HepG2 (cell line): ENCODE measurements at regions of chr6 and their contacts with region 1.

Region 1: GRCh38 chr6:31776989-31777666 is at the start of gene VWA7:
- DNase-seq: peak; percentile 85
- ATAC-seq: peak; percentile 65
- H3K4me3 ChIP-seq: peak within 1 kb of the TSS; percentile 45 to 72 (median 48)
- H3K27ac ChIP-seq: peak within 1 kb of the TSS; percentile 70
- H3K4me1 ChIP-seq: peaks cover 57% of the 10 kb centered on the region
- H3K27me3 ChIP-seq: no peaks in the 10 kb centered on the region
- CTCF ChIP-seq: peak; percentile 26
- EP300 ChIP-seq: peak in 1 of 2 experiments; percentile 45; a peak in 1 of 4 replicates
- POLR2A ChIP-seq: no peak; a peak in 1 of 4 replicates
- RAD21 ChIP-seq: no peak
- total RNA-seq, gene VWA7: 0.79 and 0.86 TPM in 2 replicates

Region 2: GRCh38 chr6:30914076-30914853 is 862.9 kb before region 1 on chr6 and contains the start of gene VARS2:
- CTCF ChIA-PET with region 1: no interaction called
- POLR2A ChIA-PET with region 1: no interaction called
- in situ Hi-C with region 1: no loop called
- intact Hi-C with region 1: no loop called
- DNase-seq: peak; percentile 92
- ATAC-seq: peak; percentile 96
- H3K4me3 ChIP-seq: peak within 1 kb of the TSS; percentile 61 to 80 (median 78)
- H3K27ac ChIP-seq: peak within 1 kb of the TSS; percentile 81
- H3K4me1 ChIP-seq: peaks cover 32% of the 10 kb centered on the region
- H3K27me3 ChIP-seq: no peaks in the 10 kb centered on the region
- CTCF ChIP-seq: peak; percentile 81
- EP300 ChIP-seq: peak in 1 of 2 experiments; percentile 35; a peak in 1 of 4 replicates
- POLR2A ChIP-seq: peak; percentile 85 to 89
- RAD21 ChIP-seq: peak; percentile 85; the same call in 1 of the 2 replicates
- total RNA-seq, gene VARS2: 45.9 and 71.8 TPM in 2 replicates

Region 3: GRCh38 chr6:31763619-31763940 is 13.5 kb before region 1 on chr6:
- CTCF ChIA-PET with region 1: no interaction called
- POLR2A ChIA-PET with region 1: interaction called, 11 read pairs
- in situ Hi-C with region 1: no loop called
- intact Hi-C with region 1: no loop called
- DNase-seq: peak; percentile 68
- ATAC-seq: peak; percentile 10
- H3K4me3 ChIP-seq: no peak overlapping the region
- H3K27ac ChIP-seq: no peak overlapping the region
- H3K4me1 ChIP-seq: peaks cover 47% of the 10 kb centered on the region
- H3K27me3 ChIP-seq: no peaks in the 10 kb centered on the region
- CTCF ChIP-seq: peak; percentile 77
- EP300 ChIP-seq: no peak
- POLR2A ChIP-seq: no peak
- RAD21 ChIP-seq: no peak

Region 4: DNA sequence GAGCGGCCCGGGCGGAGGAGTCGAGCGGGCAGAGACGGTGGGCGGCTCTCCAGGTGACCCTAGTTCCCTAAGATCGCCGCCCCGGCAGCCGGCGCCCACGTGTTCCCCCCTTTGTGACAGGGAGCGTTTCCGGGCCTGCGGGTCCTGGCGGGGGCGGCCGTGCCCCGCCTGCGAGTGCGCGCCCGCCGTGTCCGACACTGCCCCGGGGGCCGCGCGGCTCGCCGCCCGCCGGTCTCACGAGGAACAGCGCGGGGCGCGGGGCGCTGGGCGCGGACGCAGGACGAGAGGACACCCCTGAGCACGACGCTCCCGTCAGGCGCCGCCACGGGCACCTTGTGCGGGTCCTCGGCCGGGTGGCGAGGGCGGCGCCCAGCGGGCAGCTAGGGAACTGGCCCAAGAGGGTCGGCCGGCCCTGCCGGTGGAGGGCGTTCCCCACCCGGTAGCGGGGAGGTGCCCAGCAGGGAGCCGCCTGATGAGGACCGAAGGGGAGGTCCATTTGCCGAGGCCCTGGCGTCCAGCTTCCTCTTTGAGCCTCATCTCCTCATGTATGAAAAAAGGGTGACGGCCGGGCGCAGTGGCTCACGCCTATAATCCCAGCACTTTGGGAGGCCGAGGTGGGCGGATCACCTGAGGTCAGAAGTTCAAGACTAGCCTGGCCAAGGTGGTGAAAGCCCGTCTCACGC is 18.6 kb after region 1 on chr6 and contains the start of gene VARS1:
- CTCF ChIA-PET with region 1: interaction called, 9 read pairs
- POLR2A ChIA-PET with region 1: interaction called, 20 read pairs
- in situ Hi-C with region 1: no loop called
- intact Hi-C with region 1: no loop called
- DNase-seq: peak; percentile 90
- ATAC-seq: peak; percentile 89
- H3K4me3 ChIP-seq: peak within 1 kb of the TSS; percentile 89 to 98 (median 98)
- H3K27ac ChIP-seq: peak within 1 kb of the TSS; percentile 76
- H3K4me1 ChIP-seq: peaks cover 25% of the 10 kb centered on the region
- H3K27me3 ChIP-seq: no peaks in the 10 kb centered on the region; a peak in 1 of 5 replicates
- CTCF ChIP-seq: peak; percentile 98
- EP300 ChIP-seq: no peak
- POLR2A ChIP-seq: peak in 1 of 2 experiments; percentile 46; a peak in 1 of 4 replicates
- RAD21 ChIP-seq: peak; percentile 97
- total RNA-seq, gene VARS1: 56.1 and 59.2 TPM in 2 replicates

Region 5: GRCh38 chr6:31806465-31807272 is 29.5 kb after region 1 on chr6 and contains the start of gene LSM2:
- CTCF ChIA-PET with region 1: no interaction called
- POLR2A ChIA-PET with region 1: interaction called, 17 read pairs
- in situ Hi-C with region 1: no loop called
- intact Hi-C with region 1: no loop called
- DNase-seq: peak; percentile 96
- ATAC-seq: peak; percentile 92
- H3K4me3 ChIP-seq: peak within 1 kb of the TSS; percentile 82 to 90 (median 84)
- H3K27ac ChIP-seq: peak within 1 kb of the TSS; percentile 94
- H3K4me1 ChIP-seq: peaks cover 37% of the 10 kb centered on the region
- H3K27me3 ChIP-seq: no peaks in the 10 kb centered on the region
- CTCF ChIP-seq: peak; percentile 89
- EP300 ChIP-seq: peak in 1 of 2 experiments; percentile 43; a peak in 2 of 4 replicates
- POLR2A ChIP-seq: peak; percentile 75 to 89
- RAD21 ChIP-seq: peak; percentile 69
- total RNA-seq, gene LSM2: 90.5 and 93.7 TPM in 2 replicates

Region 6: GRCh38 chr6:31815025-31815838 is 38.1 kb after region 1 on chr6 and contains the starts of genes HSPA1A and HSPA1L:
- CTCF ChIA-PET with region 1: no interaction called
- POLR2A ChIA-PET with region 1: interaction called, 19 read pairs
- in situ Hi-C with region 1: no loop called
- intact Hi-C with region 1: no loop called
- DNase-seq: peak; percentile 95
- ATAC-seq: peak; percentile 64
- H3K4me3 ChIP-seq: peak within 1 kb of the TSS; percentile 54 to 71 (median 55)
- H3K27ac ChIP-seq: peak within 1 kb of the TSS; percentile 95
- H3K4me1 ChIP-seq: peaks cover 35% of the 10 kb centered on the region
- H3K27me3 ChIP-seq: no peaks in the 10 kb centered on the region
- CTCF ChIP-seq: no peak
- EP300 ChIP-seq: peak in 1 of 2 experiments; percentile 63; a peak in 2 of 4 replicates
- POLR2A ChIP-seq: peak; percentile 99 to 100
- RAD21 ChIP-seq: peak; percentile 22; the same call in 1 of the 2 replicates
- total RNA-seq, gene HSPA1A: 83.5 and 85.0 TPM in 2 replicates
- total RNA-seq, gene HSPA1L: 0.55 and 0.94 TPM in 2 replicates

Region 7: GRCh38 chr6:31822036-31822821 is 45.1 kb after region 1 on chr6:
- CTCF ChIA-PET with region 1: no interaction called
- POLR2A ChIA-PET with region 1: interaction called, 60 read pairs
- in situ Hi-C with region 1: no loop called
- intact Hi-C with region 1: no loop called
- DNase-seq: peak; percentile 67
- ATAC-seq: peak; percentile 47
- H3K4me3 ChIP-seq: peak overlapping the region; percentile 67 to 91 (median 87)
- H3K27ac ChIP-seq: peak overlapping the region; percentile 86
- H3K4me1 ChIP-seq: peaks cover 67% of the 10 kb centered on the region
- H3K27me3 ChIP-seq: no peaks in the 10 kb centered on the region
- CTCF ChIP-seq: 0 out of 2 replicates have a peak, but pooled peaks have one; percentile 13
- EP300 ChIP-seq: peak in 1 of 2 experiments; percentile 65; a peak in 2 of 4 replicates
- POLR2A ChIP-seq: peak in 1 of 2 experiments; percentile 33; a peak in 2 of 4 replicates
- RAD21 ChIP-seq: no peak

Region 8: GRCh38 chr6:31922942-31923341 is 145.8 kb after region 1 on chr6:
- CTCF ChIA-PET with region 1: no interaction called
- POLR2A ChIA-PET with region 1: interaction called, 5 read pairs
- in situ Hi-C with region 1: no loop called
- intact Hi-C with region 1: loop called (anchors 10 kb)
- DNase-seq: peak; percentile 73
- ATAC-seq: peak; percentile 44
- H3K4me3 ChIP-seq: no peak overlapping the region
- H3K27ac ChIP-seq: no peak overlapping the region
- H3K4me1 ChIP-seq: peaks cover 80% of the 10 kb centered on the region
- H3K27me3 ChIP-seq: no peaks in the 10 kb centered on the region; a peak in 1 of 5 replicates
- CTCF ChIP-seq: peak; percentile 84
- EP300 ChIP-seq: no peak
- POLR2A ChIP-seq: no peak
- RAD21 ChIP-seq: peak; percentile 77